PC-9 (cell line): ENCODE measurements at regions of chr3 and their contacts with region 1.

Region 1: DNA sequence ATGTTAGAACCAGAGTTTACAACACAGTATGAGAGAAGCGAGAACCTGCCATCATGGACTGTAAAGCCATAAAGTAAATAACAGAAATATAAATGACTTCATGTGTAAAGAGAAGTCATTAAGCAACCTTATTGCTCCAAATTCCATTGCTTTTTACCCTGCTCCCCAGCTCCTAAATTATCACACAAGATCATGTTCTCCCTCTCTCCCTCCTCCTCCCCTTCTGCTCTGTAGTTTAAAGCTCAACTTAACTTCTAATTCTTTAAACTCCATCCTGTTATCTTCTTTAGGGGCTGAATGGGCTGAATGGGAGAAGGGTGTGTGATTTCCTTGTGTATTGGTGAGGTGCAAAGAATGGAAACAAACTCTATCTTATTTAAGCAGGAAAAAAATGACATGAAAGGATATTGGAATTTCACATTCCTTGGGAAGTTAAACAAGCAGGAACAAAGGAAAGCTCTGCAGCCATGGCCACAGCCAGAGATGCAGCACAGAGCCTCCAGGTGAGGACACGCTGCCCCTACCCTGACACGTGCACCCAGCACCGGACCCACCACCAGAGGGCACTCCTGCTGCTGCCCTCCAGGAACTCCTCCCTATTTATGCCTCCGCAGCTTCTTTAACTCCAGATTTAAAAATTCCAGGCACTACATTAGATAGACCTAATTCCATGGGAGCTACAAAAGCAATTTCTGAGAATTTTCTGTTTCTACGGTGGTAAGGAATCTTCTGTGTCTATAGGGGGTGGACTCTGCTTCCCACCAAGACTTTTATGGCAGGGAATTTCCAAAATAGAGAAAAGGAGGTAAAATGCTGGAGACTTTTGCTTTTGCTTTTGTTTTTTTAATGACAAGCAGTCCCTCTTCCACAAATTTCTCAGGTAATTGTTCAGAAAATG is 76.9 kb upstream of the ABI3BP start:
- DNase-seq: peak in 1 of 2 experiments; percentile 53
- H3K4me3 ChIP-seq: no peak overlapping the region
- H3K27ac ChIP-seq: no peak overlapping the region
- H3K4me1 ChIP-seq: peaks cover 27% of the 10 kb centered on the region
- H3K27me3 ChIP-seq: no peaks in the 10 kb centered on the region
- CTCF ChIP-seq: peak; percentile 69

Region 2: GRCh38 chr3:101036213-101036618 is 33.9 kb before region 1 on chr3:
- CTCF ChIA-PET with region 1: no interaction called
- POLR2A ChIA-PET with region 1: no interaction called
- intact Hi-C with region 1: loop called (anchors 1 kb)
- DNase-seq: peak; percentile 91 to 99
- H3K4me3 ChIP-seq: peak overlapping the region; percentile 14; the same call in 1 of the 2 replicates
- H3K27ac ChIP-seq: peak overlapping the region; percentile 92
- H3K4me1 ChIP-seq: peaks cover 35% of the 10 kb centered on the region
- H3K27me3 ChIP-seq: no peaks in the 10 kb centered on the region
- CTCF ChIP-seq: no peak

Region 3: GRCh38 chr3:101243285-101244211 is 173.4 kb after region 1 on chr3:
- CTCF ChIA-PET with region 1: no interaction called
- POLR2A ChIA-PET with region 1: interaction called, 14 read pairs
- intact Hi-C with region 1: no loop called
- DNase-seq: no peak
- H3K4me3 ChIP-seq: no peak overlapping the region
- H3K27ac ChIP-seq: no peak overlapping the region
- H3K4me1 ChIP-seq: no peaks in the 10 kb centered on the region
- H3K27me3 ChIP-seq: no peaks in the 10 kb centered on the region
- CTCF ChIP-seq: no peak

Region 4: GRCh38 chr3:101512646-101513418 is 442.7 kb after region 1 on chr3 and contains the start of gene SENP7:
- CTCF ChIA-PET with region 1: no interaction called
- POLR2A ChIA-PET with region 1: no interaction called
- intact Hi-C with region 1: loop called (anchors 10 kb)
- DNase-seq: peak; percentile 79 to 84
- H3K4me3 ChIP-seq: peak within 1 kb of the TSS; percentile 73
- H3K27ac ChIP-seq: peak within 1 kb of the TSS; percentile 83
- H3K4me1 ChIP-seq: peaks cover 21% of the 10 kb centered on the region
- H3K27me3 ChIP-seq: no peaks in the 10 kb centered on the region
- CTCF ChIP-seq: no peak
- total RNA-seq, gene SENP7: 11.1 and 17.4 TPM in 2 replicates